ENCODE measurements at regions of chr6 and their contacts with region 1.

Region 1: DNA sequence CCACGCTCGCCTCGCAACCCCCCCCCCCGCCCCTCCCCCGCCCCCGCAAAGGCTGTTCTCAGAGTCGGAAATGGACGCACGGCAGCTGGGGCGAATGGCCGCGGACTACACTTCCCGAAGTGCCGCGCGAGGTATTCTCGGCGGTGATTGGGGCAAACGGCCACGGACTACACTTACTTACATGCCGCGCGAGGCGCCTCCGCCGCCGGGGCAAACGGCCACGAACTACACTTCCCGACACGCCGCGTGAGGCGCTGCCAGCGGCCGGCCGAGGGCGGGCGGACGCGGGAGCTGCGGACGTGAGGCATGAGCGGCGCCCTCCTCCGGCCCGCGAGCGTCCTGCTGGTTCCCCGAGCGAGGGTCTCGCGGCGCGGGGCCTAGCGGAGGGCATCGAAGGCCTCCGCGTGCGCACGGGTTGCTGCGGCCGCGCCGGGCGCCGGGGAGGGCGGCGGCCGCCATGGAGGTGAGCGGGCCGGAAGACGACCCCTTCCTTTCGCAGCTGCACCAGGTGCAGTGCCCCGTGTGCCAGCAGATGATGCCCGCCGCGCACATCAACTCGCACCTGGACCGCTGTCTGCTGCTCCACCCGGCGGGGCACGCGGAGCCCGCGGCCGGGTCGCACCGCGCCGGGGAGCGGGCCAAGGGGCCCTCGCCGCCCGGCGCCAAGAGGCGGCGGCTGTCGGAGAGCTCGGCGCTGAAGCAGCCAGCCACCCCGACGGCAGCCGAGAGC is at the start of gene WRNIP1:
- DNase-seq: peak; percentile 98
- ATAC-seq: peak; percentile 87
- H3K4me3 ChIP-seq: peak within 1 kb of the TSS; percentile 66 to 90 (median 77)
- H3K4me3 Mint-ChIP-seq: peak within 1 kb of the TSS; percentile 98
- H3K27ac ChIP-seq: peak within 1 kb of the TSS; percentile 96 to 97
- H3K27ac Mint-ChIP-seq: peak within 1 kb of the TSS; percentile 100
- H3K4me1 ChIP-seq: peaks cover 25 to 33% of the 10 kb centered on the region in 2 donors
- H3K4me1 Mint-ChIP-seq: peaks cover 43% of the 10 kb centered on the region
- H3K27me3 ChIP-seq: no peaks in the 10 kb centered on the region
- H3K27me3 Mint-ChIP-seq: no peaks in the 10 kb centered on the region
- CTCF ChIP-seq: peak; percentile 60
- total RNA-seq, gene WRNIP1: 32.1 and 35.2 TPM in 2 replicates

Region 2: DNA sequence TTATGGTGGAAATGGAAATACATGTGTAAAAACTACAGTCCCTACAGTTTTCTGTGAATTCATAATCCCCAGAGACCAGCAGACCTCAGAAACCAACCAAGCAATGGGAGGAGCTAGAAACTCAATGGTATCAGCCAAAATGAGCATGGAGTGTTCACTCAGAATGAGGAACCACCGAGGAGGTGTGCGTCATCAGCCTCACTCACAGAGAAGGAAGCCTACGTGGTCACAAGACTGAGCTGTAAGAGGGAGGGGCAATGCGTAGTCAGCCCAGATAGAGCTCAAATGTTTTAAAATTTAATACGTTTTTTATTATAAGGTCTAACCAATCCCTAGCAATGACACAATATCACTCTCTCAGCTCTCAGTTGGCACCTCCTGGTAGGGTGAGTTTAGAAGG is 32.0 kb before region 1 on chr6:
- CTCF ChIA-PET with region 1: interaction called, 9 read pairs
- POLR2A ChIA-PET with region 1: no interaction called
- intact Hi-C with region 1: loop called (anchors 1 kb)
- DNase-seq: peak; percentile 91
- ATAC-seq: peak; percentile 98
- H3K4me3 ChIP-seq: no peak overlapping the region
- H3K4me3 Mint-ChIP-seq: peak overlapping the region; percentile 14
- H3K27ac ChIP-seq: peak overlapping the region; percentile 62 to 88
- H3K27ac Mint-ChIP-seq: peak overlapping the region; percentile 87
- H3K4me1 ChIP-seq: peaks cover 10 to 14% of the 10 kb centered on the region in 2 donors
- H3K4me1 Mint-ChIP-seq: peaks cover 13% of the 10 kb centered on the region
- H3K27me3 ChIP-seq: no peaks in the 10 kb centered on the region
- H3K27me3 Mint-ChIP-seq: no peaks in the 10 kb centered on the region
- CTCF ChIP-seq: no peak

Region 3: GRCh38 chr6:3017304-3017703 is 252.0 kb after region 1 on chr6:
- CTCF ChIA-PET with region 1: no interaction called
- POLR2A ChIA-PET with region 1: no interaction called
- intact Hi-C with region 1: no loop called
- DNase-seq: no peak
- ATAC-seq: no peak
- H3K4me3 ChIP-seq: no peak overlapping the region
- H3K4me3 Mint-ChIP-seq: no peak overlapping the region
- H3K27ac ChIP-seq: no peak overlapping the region
- H3K27ac Mint-ChIP-seq: no peak overlapping the region
- H3K4me1 ChIP-seq: peaks cover 0 to 1% of the 10 kb centered on the region in 2 donors
- H3K4me1 Mint-ChIP-seq: no peaks in the 10 kb centered on the region
- H3K27me3 ChIP-seq: no peaks in the 10 kb centered on the region
- H3K27me3 Mint-ChIP-seq: no peaks in the 10 kb centered on the region
- CTCF ChIP-seq: no peak